HepG2 (cell line): ENCODE measurements at regions of chr2 and their contacts with region 1.

Region 1: DNA sequence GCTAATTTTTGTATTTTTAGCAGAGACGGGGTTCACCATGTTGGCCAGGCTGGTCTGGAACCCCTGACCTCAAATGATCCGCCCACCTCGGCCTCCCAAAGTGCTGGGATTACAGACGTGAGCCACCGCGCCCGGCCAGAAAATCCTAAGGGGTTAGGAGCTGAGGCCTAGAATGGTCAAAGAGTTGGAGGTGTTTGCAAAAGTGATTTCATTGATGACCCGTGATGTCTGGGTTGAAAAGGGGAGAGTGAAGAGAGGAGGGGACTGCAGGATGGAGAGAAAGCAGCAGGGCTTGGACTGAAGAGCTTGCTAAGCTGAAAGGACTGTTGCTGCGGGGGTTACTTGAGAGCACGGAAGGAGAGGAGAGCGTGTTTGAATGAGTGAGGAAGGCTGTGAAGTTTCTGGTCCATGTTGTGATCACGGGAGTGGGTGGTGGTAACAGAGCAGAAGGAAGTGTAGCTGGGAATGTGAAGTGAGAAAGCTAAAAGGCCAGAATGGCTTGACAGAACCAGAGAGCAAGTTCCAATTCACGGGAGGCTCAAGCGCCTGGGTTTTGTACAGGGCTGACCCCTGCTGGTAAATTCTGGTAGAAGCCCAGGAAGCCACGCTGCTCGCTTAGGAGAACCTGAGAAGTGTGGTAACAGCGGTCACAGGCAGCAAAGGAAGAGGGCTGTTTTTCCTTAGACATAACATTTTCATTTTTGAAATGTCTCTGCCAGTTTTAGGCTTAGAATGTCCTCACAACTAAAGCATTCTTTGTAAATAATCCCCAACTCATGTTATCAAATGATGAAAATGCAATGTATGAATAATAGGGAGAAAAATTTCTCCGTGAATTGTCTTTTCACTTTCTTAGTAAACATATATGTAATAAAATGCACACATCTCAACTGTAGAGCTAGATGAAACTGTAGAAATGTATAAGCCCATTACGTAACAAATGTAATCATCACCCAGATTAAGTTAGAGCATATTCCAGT is 40.5 kb upstream of the ACTR2 start:
- DNase-seq: peak; percentile 88
- ATAC-seq: peak; percentile 90
- H3K4me3 ChIP-seq: peak overlapping the region; percentile 62 to 75 (median 72)
- H3K27ac ChIP-seq: peak overlapping the region; percentile 64
- H3K4me1 ChIP-seq: peaks cover 33% of the 10 kb centered on the region
- H3K27me3 ChIP-seq: peaks cover 0 to 9% of the 10 kb centered on the region in 2 experiments; a peak in 4 of 5 replicates
- CTCF ChIP-seq: peak; percentile 97
- EP300 ChIP-seq: peak; percentile 20 to 23; a peak in 1 of 4 replicates
- POLR2A ChIP-seq: no peak
- RAD21 ChIP-seq: peak; percentile 92

Region 2: GRCh38 chr2:64988420-64989125 is 198.6 kb before region 1 on chr2:
- CTCF ChIA-PET with region 1: no interaction called
- POLR2A ChIA-PET with region 1: no interaction called
- in situ Hi-C with region 1: no loop called
- intact Hi-C with region 1: loop called (anchors 5 kb)
- DNase-seq: peak; percentile 75
- ATAC-seq: peak; percentile 77
- H3K4me3 ChIP-seq: peak overlapping the region; percentile 77 to 92 (median 83)
- H3K27ac ChIP-seq: peak overlapping the region; percentile 84
- H3K4me1 ChIP-seq: peaks cover 71% of the 10 kb centered on the region
- H3K27me3 ChIP-seq: no peaks in the 10 kb centered on the region; a peak in 1 of 5 replicates
- CTCF ChIP-seq: peak; percentile 64
- EP300 ChIP-seq: no peak; a peak in 1 of 4 replicates
- POLR2A ChIP-seq: peak; percentile 63 to 73
- RAD21 ChIP-seq: peak; percentile 77

Region 3: DNA sequence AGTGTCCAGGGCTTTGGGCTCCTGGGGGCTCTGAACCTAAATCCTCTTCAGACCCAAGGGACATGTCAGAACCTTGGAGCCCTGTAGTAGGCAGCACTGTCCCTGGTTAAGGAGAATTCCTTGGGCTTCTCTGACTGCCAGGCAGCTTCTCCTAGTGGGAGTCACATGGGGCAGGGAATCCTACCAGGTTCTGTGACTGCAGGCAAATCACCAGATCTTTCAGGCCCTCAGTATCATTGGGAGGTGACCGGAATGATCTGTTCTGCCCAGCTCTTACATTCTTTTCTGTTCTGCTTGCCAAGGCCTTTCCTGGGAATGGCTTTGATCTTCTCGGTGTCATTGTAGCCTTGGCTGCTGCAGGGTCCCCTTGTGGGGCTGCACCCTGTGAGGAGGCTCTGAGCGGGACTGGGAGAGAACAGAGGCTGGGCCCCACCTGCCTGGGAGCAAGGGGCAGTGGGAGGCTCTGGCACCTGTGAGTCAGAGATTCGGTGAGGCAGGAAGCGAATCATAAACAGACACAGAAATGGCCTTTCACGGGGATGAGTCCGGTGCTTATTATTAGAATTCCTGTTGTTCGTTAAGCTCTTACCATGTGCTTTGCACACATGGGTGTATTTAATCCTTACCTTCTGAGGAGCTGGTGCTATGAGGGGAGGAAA is 116.9 kb before region 1 on chr2:
- CTCF ChIA-PET with region 1: interaction called, 7 read pairs
- POLR2A ChIA-PET with region 1: interaction called, 3 read pairs
- in situ Hi-C with region 1: loop called (anchors 5 kb)
- intact Hi-C with region 1: loop called (anchors 1 kb)
- DNase-seq: peak; percentile 84
- ATAC-seq: peak; percentile 59
- H3K4me3 ChIP-seq: no peak overlapping the region
- H3K27ac ChIP-seq: peak overlapping the region; percentile 32
- H3K4me1 ChIP-seq: peaks cover 38% of the 10 kb centered on the region
- H3K27me3 ChIP-seq: no peaks in the 10 kb centered on the region
- CTCF ChIP-seq: peak; percentile 23; the same call in 1 of the 2 replicates
- EP300 ChIP-seq: 0 out of 4 replicates have a peak, but pooled peaks of 1 of the 2 experiments have one; percentile 10
- POLR2A ChIP-seq: 0 out of 4 replicates have a peak, but pooled peaks of 1 of the 2 experiments have one; percentile 8
- RAD21 ChIP-seq: no peak

Region 4: DNA sequence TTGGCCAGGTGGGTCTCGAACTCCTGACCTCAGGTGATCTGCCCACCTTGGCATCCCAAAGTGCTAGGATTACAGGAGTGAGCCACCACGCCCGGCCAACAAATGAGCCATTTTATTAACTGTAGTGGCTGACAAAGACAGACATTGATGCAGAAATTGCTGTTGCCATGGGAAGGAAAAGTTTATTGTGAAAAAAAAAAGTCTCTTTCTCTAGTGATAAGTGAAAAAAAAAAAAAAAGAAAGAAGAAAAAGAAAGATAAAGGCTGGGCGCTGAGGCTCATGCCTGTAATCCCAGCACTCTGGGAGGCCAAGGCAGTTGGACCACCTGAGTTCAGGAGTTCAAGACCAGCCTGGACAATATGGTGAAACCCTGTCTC is 17.4 kb before region 1 on chr2:
- CTCF ChIA-PET with region 1: no interaction called
- POLR2A ChIA-PET with region 1: interaction called, 4 read pairs
- in situ Hi-C with region 1: no loop called
- intact Hi-C with region 1: loop called (anchors 2 kb)
- DNase-seq: no peak
- ATAC-seq: no peak
- H3K4me3 ChIP-seq: no peak overlapping the region
- H3K27ac ChIP-seq: no peak overlapping the region
- H3K4me1 ChIP-seq: peaks cover 54% of the 10 kb centered on the region
- H3K27me3 ChIP-seq: peaks cover 2 to 4% of the 10 kb centered on the region in 2 experiments; a peak in 2 of 5 replicates
- CTCF ChIP-seq: no peak
- EP300 ChIP-seq: no peak
- POLR2A ChIP-seq: no peak
- RAD21 ChIP-seq: no peak

Region 5: DNA sequence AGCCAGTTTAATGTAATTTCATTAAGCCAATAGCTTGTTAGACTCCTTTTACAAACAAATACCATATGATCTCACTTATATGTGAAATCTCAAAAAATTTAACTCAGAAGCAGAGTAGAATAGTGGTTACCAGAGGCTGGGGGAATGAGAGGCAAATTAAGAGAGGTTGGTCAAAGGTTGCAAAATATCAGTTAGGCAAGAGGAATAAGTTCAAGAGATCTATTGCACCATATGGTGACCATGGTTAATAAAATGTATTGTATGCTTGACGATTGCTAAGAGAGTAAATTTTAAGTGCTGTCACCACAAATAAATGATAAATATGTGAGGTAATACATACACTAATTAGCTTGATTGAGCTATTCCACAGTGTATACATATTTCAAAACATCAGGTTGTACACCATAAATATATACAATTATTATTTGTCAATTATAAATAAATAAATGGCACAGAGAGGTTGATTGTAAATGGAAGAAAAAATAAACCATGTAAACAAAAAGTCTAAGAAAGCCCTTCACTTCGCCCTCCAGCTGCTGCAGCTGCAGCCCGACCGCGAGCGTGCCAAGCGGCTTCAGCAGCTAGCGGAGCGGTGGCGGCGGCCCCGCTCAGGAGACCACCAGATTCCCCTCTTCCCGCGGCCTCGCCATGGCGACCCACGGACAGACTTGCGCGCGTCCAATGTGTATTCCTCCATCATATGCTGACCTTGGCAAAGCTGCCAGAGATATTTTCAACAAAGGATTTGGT is 17.5 kb after region 1 on chr2:
- CTCF ChIA-PET with region 1: no interaction called
- POLR2A ChIA-PET with region 1: no interaction called
- in situ Hi-C with region 1: no loop called
- intact Hi-C with region 1: no loop called
- DNase-seq: no peak
- ATAC-seq: no peak
- H3K4me3 ChIP-seq: no peak overlapping the region
- H3K27ac ChIP-seq: no peak overlapping the region
- H3K4me1 ChIP-seq: no peaks in the 10 kb centered on the region
- H3K27me3 ChIP-seq: no peaks in the 10 kb centered on the region; a peak in 1 of 5 replicates
- CTCF ChIP-seq: no peak
- EP300 ChIP-seq: no peak
- POLR2A ChIP-seq: no peak
- RAD21 ChIP-seq: no peak

Region 6: GRCh38 chr2:65576861-65577601 is 389.9 kb after region 1 on chr2:
- CTCF ChIA-PET with region 1: no interaction called
- POLR2A ChIA-PET with region 1: no interaction called
- in situ Hi-C with region 1: no loop called
- intact Hi-C with region 1: loop called (anchors 10 kb)
- DNase-seq: peak; percentile 91
- ATAC-seq: peak; percentile 91
- H3K4me3 ChIP-seq: peak overlapping the region in 2 of 3 experiments; percentile 13 to 23; a peak in 1 of 6 replicates
- H3K27ac ChIP-seq: no peak overlapping the region
- H3K4me1 ChIP-seq: peaks cover 19% of the 10 kb centered on the region
- H3K27me3 ChIP-seq: no peaks in the 10 kb centered on the region
- CTCF ChIP-seq: no peak
- EP300 ChIP-seq: peak in 1 of 2 experiments; percentile 74; a peak in 1 of 4 replicates
- POLR2A ChIP-seq: no peak
- RAD21 ChIP-seq: no peak